IMR-90 (cell line): ENCODE measurements at regions of chr12 and their contacts with region 1.

Region 1: GRCh38 chr12:104381731-104382480 is 74.8 kb upstream of the CHST11 start:
- DNase-seq: peak; percentile 74
- ATAC-seq: peak; percentile 90
- H3K4me3 ChIP-seq: no peak overlapping the region
- H3K27ac ChIP-seq: no peak overlapping the region
- H3K4me1 ChIP-seq: peaks cover 4% of the 10 kb centered on the region
- H3K27me3 ChIP-seq: no peaks in the 10 kb centered on the region
- CTCF ChIP-seq: peak; percentile 93
- POLR2A ChIP-seq: no peak
- RAD21 ChIP-seq: peak; percentile 96

Region 2: GRCh38 chr12:103884316-103884715 is 497.6 kb before region 1 on chr12:
- CTCF ChIA-PET with region 1: no interaction called
- POLR2A ChIA-PET with region 1: no interaction called
- dilution Hi-C with region 1: no loop called
- in situ Hi-C with region 1: no loop called
- intact Hi-C with region 1: loop called (anchors 10 kb)
- DNase-seq: peak; percentile 76
- ATAC-seq: peak; percentile 59; the same call in 1 of the 2 replicates
- H3K4me3 ChIP-seq: no peak overlapping the region
- H3K27ac ChIP-seq: no peak overlapping the region
- H3K4me1 ChIP-seq: no peaks in the 10 kb centered on the region
- H3K27me3 ChIP-seq: no peaks in the 10 kb centered on the region
- CTCF ChIP-seq: peak; percentile 72
- POLR2A ChIP-seq: no peak
- RAD21 ChIP-seq: peak; percentile 83

Region 3: GRCh38 chr12:104230304-104231095 is 151.4 kb before region 1 on chr12:
- CTCF ChIA-PET with region 1: no interaction called
- POLR2A ChIA-PET with region 1: no interaction called
- dilution Hi-C with region 1: no loop called
- in situ Hi-C with region 1: no loop called
- intact Hi-C with region 1: no loop called
- DNase-seq: no peak
- ATAC-seq: no peak
- H3K4me3 ChIP-seq: no peak overlapping the region
- H3K27ac ChIP-seq: no peak overlapping the region
- H3K4me1 ChIP-seq: no peaks in the 10 kb centered on the region
- H3K27me3 ChIP-seq: no peaks in the 10 kb centered on the region
- CTCF ChIP-seq: no peak
- POLR2A ChIP-seq: no peak
- RAD21 ChIP-seq: no peak

Region 4: DNA sequence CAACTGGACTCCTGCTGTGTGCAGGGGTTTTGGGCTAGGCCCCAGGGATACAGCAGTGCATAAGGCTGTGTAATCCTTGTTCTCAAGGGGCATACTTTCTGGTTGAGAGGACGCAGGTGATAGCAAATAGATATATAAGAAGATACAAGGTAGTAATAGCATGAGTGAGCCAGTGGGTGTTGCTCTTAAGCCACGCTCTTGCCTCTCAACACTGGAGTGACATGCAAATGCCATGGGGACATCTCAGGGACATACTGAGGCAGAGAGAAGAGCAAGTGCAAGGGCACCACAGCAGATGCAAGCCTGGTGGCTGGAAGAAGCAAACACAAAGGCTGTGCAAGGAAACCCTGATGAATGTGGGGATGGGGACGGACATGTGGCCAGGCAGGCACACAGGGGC is 298.2 kb after region 1 on chr12:
- CTCF ChIA-PET with region 1: no interaction called
- POLR2A ChIA-PET with region 1: no interaction called
- dilution Hi-C with region 1: no loop called
- in situ Hi-C with region 1: no loop called
- intact Hi-C with region 1: loop called (anchors 5 kb)
- DNase-seq: peak; percentile 22
- ATAC-seq: peak; percentile 63; the same call in 1 of the 2 replicates
- H3K4me3 ChIP-seq: no peak overlapping the region
- H3K27ac ChIP-seq: no peak overlapping the region
- H3K4me1 ChIP-seq: no peaks in the 10 kb centered on the region
- H3K27me3 ChIP-seq: no peaks in the 10 kb centered on the region; the same call in none of the 2 replicates
- CTCF ChIP-seq: peak; percentile 39
- POLR2A ChIP-seq: no peak
- RAD21 ChIP-seq: peak; percentile 56

Region 5: DNA sequence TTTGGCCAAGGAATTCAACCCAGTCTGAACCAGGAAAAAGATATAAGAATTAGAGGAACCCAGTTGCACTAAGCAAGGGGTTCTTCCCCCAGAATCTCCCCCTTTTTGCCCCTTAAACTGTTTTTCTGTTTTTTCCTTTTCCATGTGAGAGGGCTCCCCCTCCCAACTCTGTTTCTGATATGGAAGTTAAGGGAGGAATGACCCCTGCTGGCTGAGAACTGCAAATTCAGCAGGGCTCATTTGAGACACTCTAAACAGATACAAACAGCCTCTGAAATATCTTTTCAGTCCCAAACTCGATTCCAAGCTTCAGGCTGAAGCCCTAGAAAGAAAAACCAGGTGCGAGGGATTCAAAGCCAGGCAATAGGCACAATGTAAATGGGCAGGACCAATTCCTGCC is 443.5 kb after region 1 on chr12:
- CTCF ChIA-PET with region 1: no interaction called
- POLR2A ChIA-PET with region 1: no interaction called
- dilution Hi-C with region 1: no loop called
- in situ Hi-C with region 1: no loop called
- intact Hi-C with region 1: loop called (anchors 1 kb)
- DNase-seq: peak; percentile 6
- ATAC-seq: no peak
- H3K4me3 ChIP-seq: no peak overlapping the region
- H3K27ac ChIP-seq: no peak overlapping the region
- H3K4me1 ChIP-seq: no peaks in the 10 kb centered on the region
- H3K27me3 ChIP-seq: no peaks in the 10 kb centered on the region
- CTCF ChIP-seq: peak; percentile 45
- POLR2A ChIP-seq: no peak
- RAD21 ChIP-seq: peak; percentile 63

Region 6: DNA sequence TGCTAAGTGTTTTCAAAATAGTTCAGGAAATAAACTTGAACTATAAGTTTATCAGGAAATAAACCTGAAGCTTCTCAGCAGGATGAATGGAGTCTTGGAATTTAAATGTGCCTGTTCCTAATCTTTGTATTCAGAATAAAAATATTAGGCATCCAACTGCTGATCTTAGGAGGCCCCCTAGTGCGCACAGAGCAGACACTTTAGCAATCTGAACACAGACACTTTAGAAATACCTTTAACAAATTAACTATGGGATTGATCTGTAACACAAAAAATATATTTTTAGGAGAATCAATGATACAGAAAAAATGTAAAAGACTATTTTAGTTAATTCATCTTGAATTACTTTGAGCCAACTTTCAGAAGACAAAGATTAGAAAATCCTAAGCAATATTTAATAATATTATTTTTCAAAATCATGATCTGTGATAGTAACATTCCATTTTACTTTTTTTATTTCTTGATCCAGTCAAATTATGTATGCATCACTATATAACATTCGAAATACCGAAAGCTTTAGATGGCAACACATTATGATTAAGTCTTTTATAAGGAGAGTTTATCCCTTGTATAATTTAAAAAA is 495.3 kb after region 1 on chr12:
- CTCF ChIA-PET with region 1: interaction called, 14 read pairs
- POLR2A ChIA-PET with region 1: no interaction called
- dilution Hi-C with region 1: no loop called
- in situ Hi-C with region 1: loop called (anchors 5 kb)
- intact Hi-C with region 1: loop called (anchors 1 kb)
- DNase-seq: peak; percentile 49
- ATAC-seq: peak; percentile 82
- H3K4me3 ChIP-seq: no peak overlapping the region
- H3K27ac ChIP-seq: no peak overlapping the region
- H3K4me1 ChIP-seq: no peaks in the 10 kb centered on the region
- H3K27me3 ChIP-seq: no peaks in the 10 kb centered on the region
- CTCF ChIP-seq: peak; percentile 90
- POLR2A ChIP-seq: no peak
- RAD21 ChIP-seq: peak; percentile 97

Region 7: DNA sequence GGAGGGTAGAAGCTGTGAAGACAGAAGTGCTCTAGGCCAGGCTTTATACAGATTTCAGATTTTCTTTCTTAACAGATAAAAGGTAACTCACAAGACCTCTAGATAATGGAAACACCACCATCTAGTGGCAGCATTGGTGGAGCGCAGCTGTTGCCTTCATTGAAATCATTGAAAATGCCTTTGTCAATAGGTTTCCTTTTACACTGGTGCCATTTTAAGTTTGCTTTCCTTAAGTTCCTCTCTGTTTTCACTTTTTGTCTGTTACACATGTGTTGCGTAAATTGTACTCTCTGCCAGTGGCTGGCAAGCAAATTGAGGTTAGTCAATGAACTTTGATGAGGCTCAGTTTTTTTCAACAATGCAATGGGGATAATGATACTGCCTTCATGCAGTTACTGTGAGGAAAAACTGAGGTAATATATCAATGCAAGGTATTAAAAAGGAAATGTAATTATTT is 671.2 kb after region 1 on chr12:
- CTCF ChIA-PET with region 1: interaction called, 3 read pairs
- POLR2A ChIA-PET with region 1: no interaction called
- dilution Hi-C with region 1: no loop called
- in situ Hi-C with region 1: loop called (anchors 5 kb)
- intact Hi-C with region 1: loop called (anchors 1 kb)
- DNase-seq: peak; percentile 79
- ATAC-seq: peak; percentile 95
- H3K4me3 ChIP-seq: no peak overlapping the region
- H3K27ac ChIP-seq: no peak overlapping the region
- H3K4me1 ChIP-seq: no peaks in the 10 kb centered on the region
- H3K27me3 ChIP-seq: no peaks in the 10 kb centered on the region
- CTCF ChIP-seq: peak; percentile 87
- POLR2A ChIP-seq: no peak
- RAD21 ChIP-seq: peak; percentile 81

Region 8: DNA sequence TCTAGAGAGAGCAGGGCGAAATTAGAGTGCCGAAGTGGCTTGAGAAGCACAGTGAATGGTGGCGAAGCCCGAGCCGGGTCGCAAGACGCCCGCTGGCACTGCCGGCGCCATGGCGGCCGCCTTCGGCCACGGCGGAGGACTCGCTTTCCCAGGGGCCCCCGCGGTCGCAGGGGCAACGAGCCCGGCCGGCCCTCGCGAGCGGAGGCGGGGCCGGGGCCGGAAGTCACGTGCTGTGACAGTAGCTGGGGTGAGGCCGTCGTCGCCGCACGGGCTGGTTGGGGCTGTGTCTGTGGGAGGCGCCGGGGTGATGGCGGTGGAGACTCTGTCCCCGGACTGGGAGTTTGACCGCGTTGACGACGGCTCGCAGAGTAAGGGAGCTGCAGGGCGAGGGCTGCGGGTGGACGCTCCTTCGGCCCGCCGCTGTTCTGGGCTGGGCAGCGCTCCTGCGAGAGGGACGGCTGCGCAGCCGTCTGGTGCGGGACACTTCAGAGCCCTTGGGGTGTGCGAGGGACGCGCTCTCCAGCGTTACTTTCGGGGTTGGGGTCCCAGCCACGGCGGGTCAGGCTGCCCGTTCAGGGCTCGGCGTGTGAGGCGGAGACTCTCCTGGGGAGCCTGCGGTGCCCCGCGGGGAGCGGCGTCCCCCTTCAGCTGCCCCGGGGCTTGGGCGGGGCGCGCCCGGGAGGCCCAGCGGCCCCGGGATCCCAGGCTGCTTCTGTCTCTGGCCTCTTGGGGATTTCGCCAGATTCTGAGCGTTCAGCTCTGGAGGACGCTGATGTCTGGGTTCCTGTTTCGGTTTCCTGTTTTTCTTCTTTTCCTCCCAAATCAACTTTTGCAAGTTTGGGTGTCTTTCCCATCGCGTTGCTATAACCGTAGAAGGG is 725.8 kb after region 1 on chr12 and contains the start of gene WASHC4:
- CTCF ChIA-PET with region 1: no interaction called
- POLR2A ChIA-PET with region 1: no interaction called
- dilution Hi-C with region 1: no loop called
- in situ Hi-C with region 1: no loop called
- intact Hi-C with region 1: loop called (anchors 10 kb)
- DNase-seq: peak; percentile 85
- ATAC-seq: peak; percentile 94
- H3K4me3 ChIP-seq: peak within 1 kb of the TSS; percentile 78
- H3K27ac ChIP-seq: peak within 1 kb of the TSS; percentile 94
- H3K4me1 ChIP-seq: peaks cover 3% of the 10 kb centered on the region; the same call in 1 of the 2 replicates
- H3K27me3 ChIP-seq: no peaks in the 10 kb centered on the region
- CTCF ChIP-seq: no peak; the same call in 1 of the 2 replicates
- POLR2A ChIP-seq: peak; percentile 95
- RAD21 ChIP-seq: 0 out of 2 replicates have a peak, but pooled peaks have one; percentile 5
- total RNA-seq, gene WASHC4: 47.0 and 85.5 TPM in 2 replicates